ENCODE measurements at regions of chr15 and their contacts with region 1.

Region 1: GRCh38 chr15:92714477-92715401 is 59.2 kb upstream of the FAM174B start:
- DNase-seq: peak; percentile 56
- H3K4me3 Mint-ChIP-seq: peak overlapping the region; percentile 64
- H3K27ac Mint-ChIP-seq: no peak overlapping the region
- H3K4me1 Mint-ChIP-seq: peaks cover 10% of the 10 kb centered on the region
- H3K27me3 Mint-ChIP-seq: peaks cover 34% of the 10 kb centered on the region

Region 2: GRCh38 chr15:92077353-92078085 is 637.2 kb before region 1 on chr15:
- intact Hi-C with region 1: loop called (anchors 5 kb)
- DNase-seq: peak; percentile 41
- H3K4me3 Mint-ChIP-seq: no peak overlapping the region
- H3K27ac Mint-ChIP-seq: no peak overlapping the region
- H3K4me1 Mint-ChIP-seq: peaks cover 27% of the 10 kb centered on the region
- H3K27me3 Mint-ChIP-seq: no peaks in the 10 kb centered on the region

Region 3: DNA sequence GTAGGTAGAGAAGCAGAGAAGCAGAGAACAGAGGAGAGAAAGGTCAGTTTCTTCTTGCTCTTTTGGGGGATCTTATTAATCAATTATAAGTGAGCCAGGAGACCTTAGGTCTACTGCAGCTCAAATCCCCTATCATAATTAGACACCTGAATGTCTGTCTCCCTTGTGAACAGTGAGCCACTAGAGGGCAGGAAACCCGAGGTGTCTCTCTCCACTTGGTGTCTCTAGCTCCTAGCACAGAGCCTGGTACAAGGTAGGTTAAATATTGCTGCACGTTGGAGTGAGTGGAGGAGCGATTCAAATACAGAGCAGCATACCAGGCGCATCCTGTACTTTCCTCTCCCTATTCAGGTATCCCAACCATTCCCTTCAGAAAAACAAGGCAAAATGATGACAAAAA is 323.1 kb before region 1 on chr15:
- intact Hi-C with region 1: loop called (anchors 5 kb)
- DNase-seq: no peak
- H3K4me3 Mint-ChIP-seq: no peak overlapping the region
- H3K27ac Mint-ChIP-seq: no peak overlapping the region
- H3K4me1 Mint-ChIP-seq: no peaks in the 10 kb centered on the region
- H3K27me3 Mint-ChIP-seq: peaks cover 57% of the 10 kb centered on the region

Region 4: DNA sequence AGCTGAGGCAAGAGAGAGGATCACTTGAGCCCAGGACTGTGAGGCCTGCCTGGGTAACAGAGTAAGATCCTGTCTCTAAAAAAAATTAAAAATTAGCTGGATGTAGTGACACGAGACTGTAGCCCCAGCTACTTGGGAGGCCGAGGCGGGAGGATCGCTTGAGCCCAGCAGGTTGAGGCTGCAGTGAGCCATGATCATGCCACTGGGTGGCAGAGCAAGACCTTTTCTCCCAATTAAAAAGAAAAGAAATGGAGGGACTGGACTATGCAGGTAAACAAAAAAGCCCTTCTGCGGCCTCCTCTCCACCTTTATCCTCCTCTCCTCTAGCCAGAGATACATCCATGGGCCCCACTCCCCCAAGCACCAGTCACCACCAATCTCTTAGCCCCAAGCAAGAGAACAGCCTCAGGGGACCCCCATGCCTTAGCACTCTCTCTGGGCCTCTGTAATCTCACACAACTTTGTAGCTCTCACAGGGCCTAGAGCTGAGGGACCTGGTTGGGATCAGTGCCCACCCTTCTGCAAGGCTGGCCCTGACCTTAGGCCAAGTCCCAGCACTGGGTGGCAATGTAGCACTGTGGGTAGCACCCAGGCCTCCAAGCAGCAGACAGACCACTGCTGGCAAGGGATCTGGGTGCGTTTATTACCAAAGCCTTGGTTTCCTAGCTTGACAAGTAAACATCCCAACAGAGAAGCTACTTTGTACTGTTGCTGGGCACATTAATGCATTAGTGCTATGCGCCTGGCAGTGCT is 102.6 kb before region 1 on chr15:
- intact Hi-C with region 1: loop called (anchors 1 kb)
- DNase-seq: no peak
- H3K4me3 Mint-ChIP-seq: no peak overlapping the region
- H3K27ac Mint-ChIP-seq: no peak overlapping the region
- H3K4me1 Mint-ChIP-seq: no peaks in the 10 kb centered on the region
- H3K27me3 Mint-ChIP-seq: no peaks in the 10 kb centered on the region

Region 5: DNA sequence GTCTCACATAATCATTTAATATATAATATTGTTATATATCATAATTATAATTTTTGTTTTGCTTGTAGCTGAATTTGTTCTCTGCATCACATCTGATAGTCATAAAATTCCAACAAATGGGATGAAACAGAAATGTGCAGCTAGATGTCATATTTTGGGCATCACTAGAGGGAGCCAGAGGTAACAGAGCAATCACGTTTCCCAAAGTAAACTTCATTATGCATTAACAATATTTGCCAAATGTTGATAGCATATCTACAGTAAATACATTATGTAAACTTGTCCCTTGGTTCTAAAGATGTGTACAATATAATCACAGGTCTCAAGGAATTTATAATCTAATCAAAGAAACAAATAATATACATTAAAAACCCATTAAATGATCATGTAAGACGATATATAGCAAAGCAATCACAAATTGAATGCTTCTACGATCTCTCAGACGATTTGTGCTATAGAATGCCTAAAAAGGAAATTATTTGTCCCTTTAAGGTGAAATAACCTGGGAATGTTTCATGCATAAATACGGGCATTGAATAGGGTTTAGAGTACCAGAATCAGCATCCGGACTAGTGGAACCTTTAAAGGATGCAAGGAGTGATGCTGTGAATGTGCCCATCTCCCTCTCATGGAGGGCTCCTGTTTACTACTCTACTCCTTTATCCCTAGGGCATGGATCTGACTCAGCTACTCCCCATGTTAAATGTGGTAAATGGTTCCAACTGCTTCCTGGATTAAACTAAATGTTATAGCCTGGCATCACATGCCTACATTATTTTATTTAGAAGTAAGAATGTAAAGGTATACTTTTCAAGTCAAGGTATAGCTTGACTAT is 1282.6 kb after region 1 on chr15:
- intact Hi-C with region 1: no loop called
- DNase-seq: no peak
- H3K4me3 Mint-ChIP-seq: no peak overlapping the region
- H3K27ac Mint-ChIP-seq: no peak overlapping the region
- H3K4me1 Mint-ChIP-seq: no peaks in the 10 kb centered on the region
- H3K27me3 Mint-ChIP-seq: peaks cover 20% of the 10 kb centered on the region

Measured in activated T-helper 1 cell treated with anti-CD3 and anti-CD28 coated beads, Interleukin-12 subunit alpha, Interleukin-12 subunit beta, Interleukin-2, Interleukin-4 antibody, amounts not matched to agents 30 ng/mL and 10 ng/mL and 1 ng/mL, durations not matched to agents 14 hours and 24 hours and 36 hours (primary cell).